ENCODE measurements at regions of chr12 and their contacts with region 1.

Region 1: GRCh38 chr12:92136965-92137721 is 8.5 kb downstream of the BTG1 start:
- DNase-seq: no peak
- ATAC-seq: peak; percentile 45

Region 2: GRCh38 chr12:91811481-91812287 is 325.5 kb before region 1 on chr12:
- intact Hi-C with region 1: loop called in 1 of 2 experiments (anchors 5 kb)
- DNase-seq: peak; percentile 36 to 88
- ATAC-seq: peak; percentile 57

Region 3: GRCh38 chr12:92070054-92070863 is 66.9 kb before region 1 on chr12:
- intact Hi-C with region 1: loop called in 1 of 2 experiments (anchors 5 kb)
- DNase-seq: peak; percentile 48 to 78
- ATAC-seq: peak; percentile 80